ENCODE measurements at regions of chrX and their contacts with region 1.

Region 1: DNA sequence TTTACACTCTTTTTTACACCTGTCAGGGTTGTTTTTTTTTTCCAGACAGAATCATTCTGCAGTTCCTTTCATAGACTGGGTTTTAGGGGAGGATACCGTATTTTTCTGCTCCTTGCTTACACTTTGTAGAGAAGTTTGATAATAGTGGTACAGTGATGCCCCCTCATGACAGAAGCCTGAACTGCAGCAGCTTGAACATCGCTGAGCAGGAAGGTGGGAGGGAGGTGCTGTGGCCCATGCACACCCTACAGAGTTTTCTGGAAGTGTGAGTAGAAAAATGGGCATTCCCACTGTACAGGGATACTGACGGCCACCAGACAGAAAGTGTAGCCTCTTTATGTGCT is 54.5 kb downstream of the RAB40A start:
- DNase-seq: peak; percentile 35 to 89 (median 70)

Region 2: DNA sequence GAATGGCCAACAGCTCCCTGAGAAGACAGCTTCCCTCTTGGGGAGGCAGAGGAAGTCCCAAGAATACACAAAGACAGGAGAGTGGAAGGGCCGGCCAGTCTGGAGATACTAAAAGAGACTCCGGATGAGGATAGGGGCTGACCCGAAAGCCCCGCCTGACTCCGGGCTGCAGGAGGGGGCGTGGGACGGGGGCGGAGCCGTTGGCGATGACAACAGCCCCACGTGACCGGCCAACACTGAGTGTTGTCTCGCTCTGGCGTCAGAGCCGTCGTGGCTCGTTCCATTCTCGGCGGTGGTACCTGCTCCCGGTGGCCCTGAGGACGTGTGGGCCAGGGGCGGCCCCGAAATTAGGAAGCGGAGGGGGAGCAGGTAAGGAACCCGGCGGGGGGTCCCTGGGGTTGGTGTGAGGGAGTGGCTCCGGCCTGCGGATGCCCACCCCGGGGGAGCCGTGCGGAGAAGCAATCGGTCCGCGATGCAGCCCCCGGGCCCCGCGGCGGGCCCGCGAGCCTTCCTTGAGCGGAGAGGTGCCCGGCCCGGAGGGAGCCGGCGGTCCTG is 249.8 kb before region 1 on chrX and contains the start of gene BEX4:
- intact Hi-C with region 1: loop called (anchors 2 kb)
- DNase-seq: peak; percentile 81 to 98 (median 87)

Region 3: GRCh38 chrX:103254921-103255493 is 209.7 kb before region 1 on chrX and contains the start of gene TCEAL8:
- intact Hi-C with region 1: no loop called
- DNase-seq: peak; percentile 69 to 97 (median 84)

Region 4: GRCh38 chrX:103343105-103343504 is 121.6 kb before region 1 on chrX:
- intact Hi-C with region 1: loop called (anchors 1 kb)
- DNase-seq: peak in 4 of 10 donors; percentile 17 to 38 (median 30)

Region 5: DNA sequence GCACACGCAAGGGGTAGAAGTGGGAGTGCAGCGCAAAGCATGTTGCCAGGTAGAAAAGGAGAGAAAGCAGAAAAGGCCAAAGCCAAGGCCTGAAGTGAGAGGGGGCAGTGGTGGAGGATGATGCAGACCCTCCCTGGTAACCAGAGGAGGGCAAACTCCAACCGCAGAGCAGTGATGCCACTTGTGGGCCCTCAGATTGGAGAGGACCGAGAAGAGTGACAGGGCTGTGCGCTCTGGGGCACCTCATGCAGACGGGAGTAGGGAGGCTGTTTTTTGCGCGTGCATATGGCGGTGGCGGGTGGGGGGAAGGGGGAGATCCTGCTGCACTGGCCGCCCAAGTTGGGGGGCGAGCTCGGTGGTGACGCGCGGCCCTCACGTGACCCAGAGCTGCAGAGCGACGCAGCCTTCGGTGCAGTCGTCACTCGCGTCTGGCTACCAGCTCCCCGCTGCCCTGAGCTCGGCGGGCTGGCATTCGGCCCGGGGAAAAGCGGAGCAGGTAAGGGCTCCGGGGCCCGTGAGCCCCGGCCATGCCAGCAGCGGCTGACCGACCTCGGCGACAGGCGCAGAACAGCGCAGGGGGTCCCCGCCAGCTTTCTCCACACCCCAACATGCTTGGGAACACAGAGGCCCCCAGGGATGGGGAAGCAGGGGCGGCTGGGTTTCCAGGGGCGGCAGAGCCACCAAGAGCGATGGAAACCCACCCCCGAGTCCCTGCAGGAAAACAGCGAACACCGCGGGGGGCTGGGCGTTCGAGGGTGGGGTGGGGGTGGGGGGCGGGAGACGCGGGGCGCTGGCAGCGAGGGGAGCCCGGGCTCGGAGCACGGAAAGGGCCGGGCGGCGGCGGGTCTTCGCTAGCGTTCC is 88.4 kb before region 1 on chrX and contains the start of gene BEX3:
- intact Hi-C with region 1: loop called (anchors 10 kb)
- DNase-seq: peak; percentile 44 to 96 (median 71)

Region 6: DNA sequence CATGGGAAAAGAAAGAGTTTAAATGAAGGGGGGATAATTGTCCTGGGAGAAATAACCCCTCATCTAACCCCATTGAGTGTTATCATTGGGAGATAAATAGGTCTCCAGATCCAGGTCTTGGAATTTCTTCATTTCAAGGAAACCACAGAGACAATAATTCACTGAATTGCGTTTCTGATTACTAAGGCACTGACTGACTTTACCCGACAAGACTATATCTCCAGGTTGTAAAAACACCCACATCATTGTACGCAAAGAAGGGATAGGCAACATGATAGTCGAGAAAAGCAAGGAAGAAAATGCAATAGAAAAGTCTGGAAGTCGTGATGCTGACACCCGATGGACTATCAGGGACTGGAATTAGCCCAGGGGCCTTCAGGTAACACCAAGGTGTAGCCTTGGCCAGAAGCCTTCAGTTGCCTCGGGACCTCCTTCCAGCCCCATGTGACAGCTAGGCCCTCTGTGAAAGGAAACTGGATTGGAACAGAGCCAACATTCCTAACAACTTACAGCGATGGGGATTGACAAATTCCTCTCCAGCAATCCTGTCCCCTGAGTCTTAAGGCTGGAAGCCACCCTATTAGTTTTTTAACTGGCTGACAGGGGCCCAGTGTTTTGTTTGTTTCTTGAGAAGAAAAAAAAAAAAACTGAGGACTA is 413.8 kb after region 1 on chrX:
- intact Hi-C with region 1: no loop called
- DNase-seq: no peak

Measured in posterior cingulate gyrus (tissue), 11 donors.